CD8-positive, alpha-beta T cell (primary cell): ENCODE measurements at regions of chr11 and their contacts with region 1.

Region 1: DNA sequence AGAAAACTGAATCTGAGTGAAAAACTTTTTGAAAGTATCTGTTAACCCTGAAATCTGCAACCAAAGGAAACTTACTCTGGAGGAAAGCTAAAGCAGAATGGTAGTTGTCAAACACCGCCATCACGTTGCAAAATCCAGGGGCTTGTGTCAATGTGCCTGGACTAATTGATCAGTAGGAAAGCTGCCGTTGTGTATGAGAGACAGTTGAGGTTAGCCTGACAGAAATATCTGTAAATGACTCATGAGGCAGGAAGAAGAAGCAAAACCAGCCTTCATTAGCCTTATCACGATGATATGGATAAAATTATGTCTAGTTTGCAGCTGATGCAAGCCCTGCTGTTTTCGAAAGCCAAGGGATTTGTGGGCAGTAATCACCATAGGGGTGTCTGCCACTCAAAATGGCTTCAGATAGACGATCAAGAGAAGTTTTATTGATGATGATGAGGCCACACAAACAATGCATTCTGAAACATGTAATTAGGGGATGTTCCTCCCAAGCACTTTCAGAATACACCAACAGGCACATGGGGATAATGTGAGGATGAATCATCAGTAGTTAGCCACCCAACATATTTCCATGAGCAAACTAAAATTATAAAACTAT is 8.9 kb downstream of the SCGB1A1 start:
- DNase-seq: no peak
- ATAC-seq: no peak
- H3K4me3 ChIP-seq: no peak overlapping the region
- H3K4me3 Mint-ChIP-seq: no peak overlapping the region
- H3K27ac ChIP-seq: no peak overlapping the region
- H3K27ac Mint-ChIP-seq: peak overlapping the region; percentile 82
- H3K4me1 ChIP-seq: peaks cover 37% of the 10 kb centered on the region
- H3K4me1 Mint-ChIP-seq: peaks cover 44% of the 10 kb centered on the region
- H3K27me3 ChIP-seq: no peaks in the 10 kb centered on the region
- H3K27me3 Mint-ChIP-seq: no peaks in the 10 kb centered on the region
- CTCF ChIP-seq: no peak

Region 2: GRCh38 chr11:62383822-62384221 is 43.9 kb before region 1 on chr11:
- CTCF ChIA-PET with region 1: interaction called, 6 read pairs
- POLR2A ChIA-PET with region 1: no interaction called
- intact Hi-C with region 1: loop called in 1 of 2 experiments (anchors 1 kb)
- DNase-seq: no peak
- ATAC-seq: no peak
- H3K4me3 ChIP-seq: no peak overlapping the region
- H3K4me3 Mint-ChIP-seq: no peak overlapping the region
- H3K27ac ChIP-seq: no peak overlapping the region
- H3K27ac Mint-ChIP-seq: no peak overlapping the region
- H3K4me1 ChIP-seq: peaks cover 9% of the 10 kb centered on the region
- H3K4me1 Mint-ChIP-seq: peaks cover 9% of the 10 kb centered on the region
- H3K27me3 ChIP-seq: no peaks in the 10 kb centered on the region
- H3K27me3 Mint-ChIP-seq: no peaks in the 10 kb centered on the region
- CTCF ChIP-seq: no peak

Region 3: GRCh38 chr11:62413060-62413696 is 14.6 kb before region 1 on chr11:
- CTCF ChIA-PET with region 1: interaction called, 22 read pairs
- POLR2A ChIA-PET with region 1: no interaction called
- intact Hi-C with region 1: no loop called
- DNase-seq: no peak
- ATAC-seq: no peak
- H3K4me3 ChIP-seq: no peak overlapping the region
- H3K4me3 Mint-ChIP-seq: no peak overlapping the region
- H3K27ac ChIP-seq: no peak overlapping the region
- H3K27ac Mint-ChIP-seq: no peak overlapping the region
- H3K4me1 ChIP-seq: no peaks in the 10 kb centered on the region
- H3K4me1 Mint-ChIP-seq: no peaks in the 10 kb centered on the region
- H3K27me3 ChIP-seq: no peaks in the 10 kb centered on the region
- H3K27me3 Mint-ChIP-seq: no peaks in the 10 kb centered on the region
- CTCF ChIP-seq: no peak

Region 4: GRCh38 chr11:62542750-62543567 is 115.2 kb after region 1 on chr11:
- CTCF ChIA-PET with region 1: interaction called, 79 read pairs
- POLR2A ChIA-PET with region 1: interaction called, 7 read pairs
- intact Hi-C with region 1: loop called (anchors 1 to 2 kb)
- DNase-seq: peak in 8 of 9 experiments; percentile 60 to 91 (median 76)
- ATAC-seq: peak; percentile 64
- H3K4me3 ChIP-seq: peak overlapping the region; percentile 52 to 74
- H3K4me3 Mint-ChIP-seq: peak overlapping the region; percentile 94
- H3K27ac ChIP-seq: peak overlapping the region; percentile 79 to 85
- H3K27ac Mint-ChIP-seq: peak overlapping the region; percentile 93
- H3K4me1 ChIP-seq: peaks cover 84% of the 10 kb centered on the region
- H3K4me1 Mint-ChIP-seq: peaks cover 73% of the 10 kb centered on the region
- H3K27me3 ChIP-seq: no peaks in the 10 kb centered on the region
- H3K27me3 Mint-ChIP-seq: no peaks in the 10 kb centered on the region
- CTCF ChIP-seq: peak; percentile 94

Region 5: GRCh38 chr11:62694455-62695167 is 266.9 kb after region 1 on chr11:
- CTCF ChIA-PET with region 1: interaction called, 11 read pairs
- POLR2A ChIA-PET with region 1: no interaction called
- intact Hi-C with region 1: loop called in 1 of 2 experiments (anchors 1 kb)
- DNase-seq: peak; percentile 57 to 88 (median 81)
- ATAC-seq: peak; percentile 91
- H3K4me3 ChIP-seq: no peak overlapping the region
- H3K4me3 Mint-ChIP-seq: no peak overlapping the region
- H3K27ac ChIP-seq: no peak overlapping the region
- H3K27ac Mint-ChIP-seq: no peak overlapping the region
- H3K4me1 ChIP-seq: peaks cover 6% of the 10 kb centered on the region
- H3K4me1 Mint-ChIP-seq: peaks cover 3% of the 10 kb centered on the region
- H3K27me3 ChIP-seq: no peaks in the 10 kb centered on the region
- H3K27me3 Mint-ChIP-seq: no peaks in the 10 kb centered on the region
- CTCF ChIP-seq: peak; percentile 79